Heart right ventricle (tissue), 16 donors: ENCODE measurements at regions of chr2 and their contacts with region 1.

Region 1: GRCh38 chr2:216829533-216829932 is 30.3 kb downstream of the TNP1 start:
- DNase-seq: peak; percentile 77 to 93
- ATAC-seq: peak; percentile 89 to 97 (median 96)
- H3K4me3 ChIP-seq: no peak overlapping the region
- H3K27ac ChIP-seq: peak overlapping the region in 5 of 10 donors; percentile 21 to 64 (median 42)
- H3K4me1 ChIP-seq: peaks cover 3 to 51% (median 26%) of the 10 kb centered on the region in 9 donors
- H3K27me3 ChIP-seq: no peaks in the 10 kb centered on the region
- CTCF ChIP-seq: no peak

Region 2: GRCh38 chr2:216849987-216850386 is 20.5 kb after region 1 on chr2:
- intact Hi-C with region 1: loop called in 1 of 10 experiments (anchors 1 kb)
- DNase-seq: peak; percentile 70 to 75
- ATAC-seq: peak; percentile 47 to 92 (median 89)
- H3K4me3 ChIP-seq: no peak overlapping the region
- H3K27ac ChIP-seq: peak overlapping the region in 1 of 10 donors; percentile 40
- H3K4me1 ChIP-seq: peaks cover 2 to 29% (median 17%) of the 10 kb centered on the region in 9 donors
- H3K27me3 ChIP-seq: no peaks in the 10 kb centered on the region
- CTCF ChIP-seq: no peak